CD14-positive monocyte (primary cell): ENCODE measurements at regions of chr2 and their contacts with region 1.

Region 1: DNA sequence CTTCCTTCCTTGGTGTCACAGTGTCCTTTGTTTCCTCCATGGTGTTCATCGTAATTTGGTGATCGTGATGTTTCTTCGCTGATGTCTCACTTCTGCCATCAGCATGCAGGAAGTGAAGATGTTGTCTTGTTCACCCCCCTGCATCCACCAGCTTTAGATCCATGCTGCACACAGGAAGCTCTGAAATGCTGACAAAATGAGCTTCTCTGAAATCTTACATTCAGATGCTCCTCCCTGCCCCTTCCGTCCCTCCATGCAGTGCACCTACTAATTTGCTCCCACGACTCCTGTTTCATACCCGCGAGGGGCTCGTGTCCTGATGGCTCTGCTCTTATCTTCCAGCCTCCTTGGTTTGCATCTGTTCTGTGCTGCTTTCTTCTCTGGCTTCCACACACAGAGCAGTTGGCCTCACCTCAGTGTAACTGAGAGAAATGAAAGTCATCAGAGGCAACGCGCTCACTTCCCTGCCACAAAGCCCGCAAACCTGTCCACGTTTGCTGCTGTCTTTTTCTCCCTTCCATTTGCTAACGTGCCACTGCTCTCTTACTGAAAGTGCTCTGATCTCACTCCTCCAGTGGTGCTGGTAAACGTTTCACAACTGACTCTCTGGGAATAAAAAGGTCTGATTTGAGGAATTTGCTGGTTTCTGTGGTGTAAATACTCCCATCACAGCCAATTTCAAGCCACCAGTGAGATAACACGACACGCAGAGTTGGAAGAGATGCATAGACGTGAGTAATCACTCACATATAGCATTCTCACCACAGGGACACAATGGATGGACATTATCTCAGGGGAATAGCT is 41.0 kb upstream of the MGAT4A start:
- DNase-seq: peak in 2 of 3 donors; percentile 37 to 38
- H3K4me3 ChIP-seq: peak overlapping the region; percentile 12 to 73 (median 49)
- H3K4me3 Mint-ChIP-seq: peak overlapping the region; percentile 81 to 91
- H3K27ac ChIP-seq: peak overlapping the region; percentile 40 to 79
- H3K27ac Mint-ChIP-seq: peak overlapping the region; percentile 62 to 89 (median 78)
- H3K4me1 ChIP-seq: peaks cover 41 to 51% of the 10 kb centered on the region in 2 donors
- H3K4me1 Mint-ChIP-seq: peaks cover 55% of the 10 kb centered on the region
- H3K27me3 ChIP-seq: no peaks in the 10 kb centered on the region
- H3K27me3 Mint-ChIP-seq: peaks cover 1 to 6% (median 4%) of the 10 kb centered on the region in 3 donors
- CTCF ChIP-seq: no peak

Region 2: DNA sequence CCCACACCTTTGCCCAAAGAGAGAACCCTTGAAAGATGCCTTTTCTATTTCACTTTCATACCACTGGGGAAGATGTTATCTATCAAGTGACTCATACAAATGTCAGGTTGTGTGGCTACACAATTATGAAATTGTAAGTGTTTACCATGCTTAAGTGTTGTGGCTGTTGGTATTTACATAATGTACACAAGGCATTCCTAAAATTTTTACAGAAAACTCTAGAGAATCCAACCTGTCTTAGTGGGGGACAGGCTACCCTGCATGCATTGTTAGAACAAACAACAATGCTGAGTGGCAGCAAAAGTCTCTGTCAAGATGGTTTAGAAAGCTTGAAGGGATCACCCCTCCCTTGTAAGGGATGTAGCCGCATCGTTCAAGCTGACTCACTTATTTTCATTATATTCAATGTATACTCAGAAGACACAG is 35.4 kb before region 1 on chr2:
- intact Hi-C with region 1: loop called in 1 of 2 experiments (anchors 5 kb)
- DNase-seq: no peak
- H3K4me3 ChIP-seq: no peak overlapping the region
- H3K4me3 Mint-ChIP-seq: no peak overlapping the region
- H3K27ac ChIP-seq: no peak overlapping the region
- H3K27ac Mint-ChIP-seq: no peak overlapping the region
- H3K4me1 ChIP-seq: peaks cover 36 to 37% of the 10 kb centered on the region in 2 donors
- H3K4me1 Mint-ChIP-seq: peaks cover 41% of the 10 kb centered on the region
- H3K27me3 ChIP-seq: no peaks in the 10 kb centered on the region
- H3K27me3 Mint-ChIP-seq: peaks cover 2 to 4% (median 3%) of the 10 kb centered on the region in 3 donors
- CTCF ChIP-seq: no peak

Region 3: GRCh38 chr2:98805412-98806171 is 33.7 kb after region 1 on chr2:
- intact Hi-C with region 1: no loop called
- DNase-seq: peak; percentile 73 to 84 (median 80)
- H3K4me3 ChIP-seq: peak overlapping the region in 1 of 3 experiments; percentile 39
- H3K4me3 Mint-ChIP-seq: peak overlapping the region; percentile 58 to 77
- H3K27ac ChIP-seq: peak overlapping the region; percentile 61 to 77
- H3K27ac Mint-ChIP-seq: peak overlapping the region; percentile 79 to 91 (median 88)
- H3K4me1 ChIP-seq: peaks cover 46 to 48% of the 10 kb centered on the region in 2 donors
- H3K4me1 Mint-ChIP-seq: peaks cover 55% of the 10 kb centered on the region
- H3K27me3 ChIP-seq: no peaks in the 10 kb centered on the region
- H3K27me3 Mint-ChIP-seq: peaks cover 0 to 3% (median 2%) of the 10 kb centered on the region in 3 donors
- CTCF ChIP-seq: no peak